ENCODE measurements at regions of chr7 and their contacts with region 1.

Region 1: DNA sequence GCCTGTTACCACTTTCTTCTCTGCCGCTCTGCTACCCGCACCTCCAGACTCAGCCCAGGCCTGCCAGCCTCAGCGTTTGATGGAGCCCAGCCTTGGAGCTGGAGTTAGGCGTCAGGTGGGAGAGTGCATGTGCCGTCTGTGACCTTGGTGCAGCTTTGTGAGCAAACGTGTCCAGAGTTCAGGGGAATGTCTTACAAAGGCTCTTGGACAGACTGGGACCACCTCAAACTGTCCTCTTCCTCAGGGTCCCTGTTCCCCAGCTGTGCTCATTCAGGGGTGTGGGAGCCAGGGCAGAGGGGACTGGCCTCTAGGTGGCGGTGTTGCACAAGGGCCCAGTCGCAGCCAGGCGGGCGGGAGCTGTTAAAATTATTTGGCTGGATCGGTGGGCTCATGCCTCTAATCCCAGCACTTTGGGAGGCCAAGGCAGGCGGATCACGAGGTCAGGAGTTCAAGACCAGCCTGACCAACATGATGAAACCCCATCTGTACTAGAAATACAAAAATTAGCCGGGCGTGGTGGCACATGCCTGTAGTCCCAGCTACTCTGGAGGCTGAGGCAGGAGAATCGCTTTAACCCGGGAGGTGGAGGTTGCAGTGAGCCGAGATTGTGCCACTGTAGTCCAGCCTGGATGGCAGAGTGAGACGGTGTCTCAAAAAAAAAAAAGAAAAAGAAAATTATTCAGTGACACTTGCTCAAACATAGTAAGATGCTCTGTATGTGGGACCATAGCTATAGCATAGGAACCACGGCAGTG is 89.2 kb downstream of the ADCY1 start:
- DNase-seq: no peak
- H3K4me3 ChIP-seq: no peak overlapping the region
- H3K27ac ChIP-seq: no peak overlapping the region
- H3K4me1 ChIP-seq: peaks cover 0 to 4% of the 10 kb centered on the region in 2 experiments; a peak in 1 of 4 replicates
- H3K27me3 ChIP-seq: no peaks in the 10 kb centered on the region
- CTCF ChIP-seq: peak; percentile 49
- EP300 ChIP-seq: no peak
- RAD21 ChIP-seq: peak; percentile 27; the same call in 1 of the 2 replicates

Region 2: DNA sequence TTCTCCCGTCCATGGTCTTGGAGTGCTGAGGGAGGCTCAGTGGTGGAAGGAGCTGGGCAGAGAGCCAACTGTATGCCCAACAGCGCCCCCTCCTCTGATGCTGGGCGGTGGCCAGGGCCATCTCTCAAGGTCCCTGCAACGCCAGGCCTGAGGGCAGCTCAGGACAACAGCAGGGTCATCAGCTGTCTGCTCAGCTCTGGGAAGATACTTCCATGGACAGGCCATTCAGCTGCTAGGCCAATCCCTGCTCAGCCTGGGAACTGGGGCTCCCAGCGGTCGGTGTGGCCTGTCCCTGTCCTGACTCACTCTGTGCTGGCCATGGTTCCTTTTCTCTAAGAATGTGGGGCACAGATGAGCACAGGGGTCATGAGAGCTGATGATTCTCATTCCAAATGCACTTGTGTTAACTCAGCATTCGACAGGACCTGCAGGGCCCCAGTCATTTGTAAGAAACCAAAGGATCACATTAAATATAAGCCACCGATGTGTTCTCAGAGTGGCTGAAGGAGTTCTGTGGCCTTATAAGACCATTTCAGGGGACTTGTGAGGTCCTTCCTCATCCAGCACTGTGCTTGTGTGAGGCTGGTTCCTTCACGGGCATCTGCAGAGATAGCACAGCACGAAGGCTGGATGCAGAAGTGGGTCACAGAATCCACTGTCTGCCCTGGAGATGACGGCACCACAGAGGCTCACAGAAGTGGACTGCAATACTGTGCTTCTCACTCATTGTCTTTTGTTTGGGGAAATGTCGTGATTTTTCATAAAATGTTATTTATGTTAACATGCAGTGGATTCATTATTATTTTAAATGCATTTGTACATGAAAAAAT is 16.1 kb before region 1 on chr7:
- CTCF ChIA-PET with region 1: interaction called, 13 read pairs
- POLR2A ChIA-PET with region 1: interaction called, 3 read pairs
- DNase-seq: peak; percentile 82
- H3K4me3 ChIP-seq: no peak overlapping the region
- H3K27ac ChIP-seq: peak overlapping the region in 1 of 2 experiments; percentile 80; a peak in 2 of 4 replicates
- H3K4me1 ChIP-seq: peaks cover 0 to 43% of the 10 kb centered on the region in 2 experiments; a peak in 2 of 4 replicates
- H3K27me3 ChIP-seq: no peaks in the 10 kb centered on the region
- CTCF ChIP-seq: no peak
- EP300 ChIP-seq: no peak
- RAD21 ChIP-seq: peak; percentile 47

Region 3: DNA sequence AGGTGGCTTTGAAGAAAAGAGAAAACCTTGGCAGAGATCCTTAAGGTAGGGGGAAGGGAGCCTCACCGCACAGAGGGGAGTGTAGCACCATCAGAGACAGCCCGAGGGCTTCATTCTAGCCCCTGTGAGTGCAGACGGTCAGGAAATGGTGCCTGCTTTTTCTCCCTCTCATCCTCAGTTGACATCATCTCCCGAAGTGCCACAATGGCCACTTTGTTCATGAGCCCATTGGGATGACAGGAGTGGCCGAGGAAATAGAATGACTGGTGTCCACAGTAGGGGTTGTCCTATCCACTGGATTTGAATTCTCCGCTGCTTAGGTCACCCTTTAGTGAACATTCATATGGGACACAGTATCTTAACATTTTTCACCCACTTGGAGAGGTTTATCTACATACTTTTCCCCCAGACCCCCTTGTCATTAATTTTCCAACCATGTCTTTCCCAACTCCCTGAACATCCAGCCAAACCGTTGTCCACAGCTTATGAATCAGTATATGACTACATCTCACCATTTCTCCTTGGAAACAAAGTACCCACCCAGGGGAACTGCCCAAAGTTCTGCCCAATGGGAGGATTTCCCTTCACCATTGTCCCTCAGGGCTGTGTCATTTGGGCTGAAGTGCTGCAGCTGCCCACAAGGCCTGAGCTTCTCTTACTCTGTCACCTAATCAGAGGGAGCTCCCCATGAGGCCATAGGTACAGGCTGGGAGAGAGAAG is 19.7 kb after region 1 on chr7:
- CTCF ChIA-PET with region 1: no interaction called
- POLR2A ChIA-PET with region 1: no interaction called
- DNase-seq: no peak
- H3K4me3 ChIP-seq: no peak overlapping the region
- H3K27ac ChIP-seq: no peak overlapping the region; a peak in 1 of 4 replicates
- H3K4me1 ChIP-seq: peaks cover 0 to 8% of the 10 kb centered on the region in 2 experiments; a peak in 1 of 4 replicates
- H3K27me3 ChIP-seq: no peaks in the 10 kb centered on the region
- CTCF ChIP-seq: no peak
- EP300 ChIP-seq: no peak
- RAD21 ChIP-seq: no peak

Region 4: GRCh38 chr7:45695249-45695995 is 32.1 kb after region 1 on chr7:
- CTCF ChIA-PET with region 1: no interaction called
- POLR2A ChIA-PET with region 1: no interaction called
- DNase-seq: no peak
- H3K4me3 ChIP-seq: no peak overlapping the region
- H3K27ac ChIP-seq: no peak overlapping the region
- H3K4me1 ChIP-seq: peaks cover 0 to 10% of the 10 kb centered on the region in 2 experiments; a peak in 2 of 4 replicates
- H3K27me3 ChIP-seq: peaks cover 3% of the 10 kb centered on the region; the same call in 1 of the 2 replicates
- CTCF ChIP-seq: no peak
- EP300 ChIP-seq: no peak
- RAD21 ChIP-seq: no peak